ENCODE measurements at regions of chr10 and their contacts with region 1.

Region 1: GRCh38 chr10:88835096-88835909 is 16.3 kb downstream of the ANKRD22 start:
- DNase-seq: peak; percentile 78 to 90
- H3K4me3 ChIP-seq: no peak overlapping the region
- H3K27ac ChIP-seq: no peak overlapping the region
- H3K4me1 ChIP-seq: no peaks in the 10 kb centered on the region
- H3K27me3 ChIP-seq: no peaks in the 10 kb centered on the region
- CTCF ChIP-seq: peak; percentile 81 to 93

Region 2: GRCh38 chr10:88877298-88877697 is 42.0 kb after region 1 on chr10:
- intact Hi-C with region 1: loop called (anchors 2 kb)
- DNase-seq: no peak
- H3K4me3 ChIP-seq: no peak overlapping the region
- H3K27ac ChIP-seq: no peak overlapping the region
- H3K4me1 ChIP-seq: peaks cover 0 to 24% (median 7%) of the 10 kb centered on the region in 4 donors
- H3K27me3 ChIP-seq: peaks cover 0 to 6% of the 10 kb centered on the region in 2 donors
- CTCF ChIP-seq: no peak

Region 3: GRCh38 chr10:88889559-88890337 is 54.4 kb after region 1 on chr10:
- intact Hi-C with region 1: no loop called
- DNase-seq: no peak
- H3K4me3 ChIP-seq: no peak overlapping the region
- H3K27ac ChIP-seq: no peak overlapping the region
- H3K4me1 ChIP-seq: no peaks in the 10 kb centered on the region
- H3K27me3 ChIP-seq: no peaks in the 10 kb centered on the region
- CTCF ChIP-seq: no peak

Region 4: DNA sequence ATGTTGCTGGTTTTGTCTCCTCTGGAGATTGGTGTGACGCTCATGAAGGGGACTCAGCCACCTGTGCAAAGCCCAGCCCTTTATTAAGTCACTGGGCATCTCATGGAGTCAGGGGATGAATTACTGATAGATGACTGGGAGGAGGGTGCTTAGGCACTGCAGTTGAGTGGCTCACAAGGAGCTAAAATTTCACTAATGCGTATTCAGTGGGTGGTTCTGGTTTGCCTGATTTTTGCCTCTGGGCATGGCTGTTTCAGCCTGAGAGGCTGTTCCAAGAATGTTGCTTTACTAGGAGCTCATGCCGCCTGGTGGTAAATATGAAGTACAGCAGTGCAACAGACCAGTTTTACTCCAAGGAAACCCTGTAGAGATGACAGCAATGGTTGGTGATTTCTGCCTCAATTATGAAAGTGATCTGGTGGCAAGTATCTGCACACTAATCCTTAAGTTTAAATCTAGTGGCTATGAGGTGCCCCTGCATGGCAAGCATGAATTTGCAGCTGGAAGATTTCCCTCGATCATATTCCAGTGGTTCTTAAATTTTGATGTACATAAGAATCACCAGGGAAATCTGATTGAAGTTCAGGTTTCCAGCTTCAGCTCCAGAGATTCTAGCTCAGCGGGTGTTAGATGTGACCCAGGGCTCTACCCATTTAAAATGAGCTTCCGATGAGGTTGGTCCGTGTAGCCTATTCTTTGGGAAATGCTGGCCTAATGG is 97.4 kb after region 1 on chr10:
- intact Hi-C with region 1: loop called (anchors 5 kb)
- DNase-seq: peak; percentile 70 to 85
- H3K4me3 ChIP-seq: no peak overlapping the region
- H3K27ac ChIP-seq: peak overlapping the region; percentile 67 to 76
- H3K4me1 ChIP-seq: peaks cover 0 to 20% (median 9%) of the 10 kb centered on the region in 4 donors
- H3K27me3 ChIP-seq: no peaks in the 10 kb centered on the region
- CTCF ChIP-seq: peak; percentile 89 to 95

Region 5: DNA sequence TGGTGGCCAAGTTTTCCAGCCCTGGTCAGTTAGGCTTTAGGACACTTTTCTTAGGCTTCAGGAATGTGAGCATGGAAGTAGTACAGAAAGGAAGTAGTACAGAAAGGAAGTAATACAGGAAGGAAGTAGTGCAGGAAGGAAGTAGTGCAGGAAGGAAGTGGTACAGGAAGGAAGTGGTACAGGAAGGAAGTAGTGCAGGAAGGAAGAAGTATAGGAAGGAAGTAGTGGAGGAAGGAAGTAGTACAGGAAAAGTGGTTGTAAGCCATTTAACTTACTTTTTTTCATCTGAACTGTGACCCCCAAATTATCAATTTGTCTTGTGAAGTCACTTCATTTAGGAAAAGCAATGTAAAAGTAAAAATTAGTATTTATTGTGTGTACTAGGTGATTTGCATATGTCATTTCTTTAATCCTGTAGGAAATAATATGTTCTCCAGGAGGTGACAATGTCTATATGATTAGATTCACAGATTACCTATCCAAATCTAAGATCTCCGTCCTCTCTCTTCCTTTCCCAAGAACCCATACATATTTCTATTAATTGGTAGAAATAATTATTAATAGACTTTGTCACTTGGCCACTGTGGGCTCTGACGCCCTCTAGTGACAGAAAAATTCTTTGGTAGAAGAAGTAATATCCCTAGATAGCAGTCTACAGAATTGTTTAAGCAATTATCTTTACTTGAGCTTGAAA is 151.4 kb after region 1 on chr10:
- intact Hi-C with region 1: loop called (anchors 10 kb)
- DNase-seq: no peak
- H3K4me3 ChIP-seq: no peak overlapping the region
- H3K27ac ChIP-seq: peak overlapping the region; percentile 82 to 92
- H3K4me1 ChIP-seq: peaks cover 0 to 82% (median 38%) of the 10 kb centered on the region in 4 donors
- H3K27me3 ChIP-seq: no peaks in the 10 kb centered on the region
- CTCF ChIP-seq: peak; percentile 71 to 75

Region 6: GRCh38 chr10:89210794-89211425 is 375.6 kb after region 1 on chr10:
- intact Hi-C with region 1: loop called (anchors 2 kb)
- DNase-seq: no peak
- H3K4me3 ChIP-seq: no peak overlapping the region
- H3K27ac ChIP-seq: no peak overlapping the region
- H3K4me1 ChIP-seq: peaks cover 0 to 19% (median 13%) of the 10 kb centered on the region in 4 donors
- H3K27me3 ChIP-seq: peaks cover 0 to 7% of the 10 kb centered on the region in 2 donors
- CTCF ChIP-seq: no peak

Measured in tibial artery (tissue), 4 donors.